Heart right ventricle (tissue), 16 donors: ENCODE measurements at regions of chr6 and their contacts with region 1.

Region 1: GRCh38 chr6:7112741-7113313 is 5.1 kb downstream of the RREB1 start:
- DNase-seq: peak in 1 of 2 donors; percentile 30
- ATAC-seq: peak in 4 of 8 donors; percentile 18 to 28 (median 22)
- H3K4me3 ChIP-seq: peak overlapping the region in 3 of 10 donors; percentile 11 to 15 (median 14)
- H3K27ac ChIP-seq: peak overlapping the region in 9 of 10 donors; percentile 20 to 96 (median 37)
- H3K4me1 ChIP-seq: peaks cover 13 to 82% (median 67%) of the 10 kb centered on the region in 9 donors
- H3K27me3 ChIP-seq: no peaks in the 10 kb centered on the region
- CTCF ChIP-seq: no peak

Region 2: DNA sequence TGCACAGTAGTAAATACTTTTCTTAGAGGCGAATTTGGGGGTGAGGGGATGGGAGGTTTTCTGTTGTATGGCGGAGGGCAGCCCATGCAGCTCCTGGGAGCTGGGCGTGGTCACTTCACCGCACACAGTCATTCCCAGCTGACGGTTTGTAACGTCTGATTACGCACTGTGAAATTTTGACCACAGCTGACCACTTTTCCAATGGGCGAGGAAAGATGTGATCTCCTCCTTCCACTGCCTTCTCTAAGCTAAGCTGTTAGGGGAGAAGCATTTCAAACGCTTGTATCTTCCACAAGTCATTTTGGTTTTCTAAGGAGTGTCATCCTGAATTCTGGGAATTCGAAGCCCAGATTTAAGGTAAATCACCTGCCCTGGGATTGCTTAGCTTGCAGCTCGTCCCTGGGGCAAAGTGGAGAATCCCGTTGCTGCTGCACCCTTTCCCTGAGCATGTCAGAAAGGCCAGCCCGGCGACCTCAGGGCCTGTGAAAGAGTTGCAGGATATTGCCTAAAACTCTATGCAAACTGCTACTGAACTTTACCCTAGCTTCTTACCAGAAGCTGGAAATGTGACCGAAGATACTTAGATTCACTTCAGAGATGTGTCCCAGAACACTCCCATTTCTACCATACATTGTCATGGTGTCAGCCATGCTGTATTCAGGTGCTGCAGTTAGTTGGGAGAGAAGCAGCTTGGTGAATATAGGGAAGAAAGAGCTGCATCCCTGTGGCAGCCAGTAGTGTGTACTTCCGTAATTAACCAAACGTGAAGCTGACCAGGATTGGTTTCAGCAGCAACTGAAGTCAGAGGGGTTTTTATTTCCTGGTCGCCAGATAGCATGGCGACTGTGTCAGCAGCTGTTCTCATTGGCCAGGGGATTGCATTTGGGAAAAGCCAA is 53.8 kb after region 1 on chr6:
- intact Hi-C with region 1: loop called in 2 of 10 experiments (anchors 5 to 10 kb)
- DNase-seq: no peak
- ATAC-seq: peak in 1 of 8 donors; percentile 9
- H3K4me3 ChIP-seq: no peak overlapping the region
- H3K27ac ChIP-seq: peak overlapping the region in 4 of 10 donors; percentile 23 to 78 (median 44)
- H3K4me1 ChIP-seq: peaks cover 25 to 99% (median 86%) of the 10 kb centered on the region in 9 donors
- H3K27me3 ChIP-seq: no peaks in the 10 kb centered on the region
- CTCF ChIP-seq: no peak

Region 3: DNA sequence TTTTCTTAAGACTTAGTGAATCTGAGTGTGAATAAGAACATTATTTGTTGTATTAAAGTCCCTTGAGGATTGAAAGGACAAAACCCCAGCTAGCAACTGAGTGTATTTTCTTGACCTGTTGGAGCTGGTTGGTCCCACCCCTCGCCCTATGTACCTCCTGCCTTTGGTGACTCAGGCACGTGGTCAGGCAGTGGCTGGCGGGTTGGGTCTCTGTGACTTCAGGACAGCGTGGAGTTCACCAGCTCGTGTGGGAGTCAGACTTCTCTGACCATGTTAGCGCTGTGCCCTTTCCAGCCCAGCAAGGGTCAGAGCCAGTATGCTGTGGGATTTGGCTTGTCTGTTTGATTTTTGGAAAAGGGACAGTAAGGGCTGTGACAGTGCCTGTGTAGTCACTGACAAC is 106.5 kb after region 1 on chr6:
- intact Hi-C with region 1: loop called in 2 of 10 experiments (anchors 5 to 10 kb)
- DNase-seq: peak in 1 of 2 donors; percentile 48
- ATAC-seq: peak in 6 of 8 donors; percentile 23 to 49 (median 30)
- H3K4me3 ChIP-seq: no peak overlapping the region
- H3K27ac ChIP-seq: peak overlapping the region in 9 of 10 donors; percentile 19 to 82 (median 64)
- H3K4me1 ChIP-seq: peaks cover 26 to 87% (median 77%) of the 10 kb centered on the region in 9 donors
- H3K27me3 ChIP-seq: no peaks in the 10 kb centered on the region
- CTCF ChIP-seq: no peak